Natural killer cell (primary cell): ENCODE measurements at regions of chr17 and their contacts with region 1.

Region 1: DNA sequence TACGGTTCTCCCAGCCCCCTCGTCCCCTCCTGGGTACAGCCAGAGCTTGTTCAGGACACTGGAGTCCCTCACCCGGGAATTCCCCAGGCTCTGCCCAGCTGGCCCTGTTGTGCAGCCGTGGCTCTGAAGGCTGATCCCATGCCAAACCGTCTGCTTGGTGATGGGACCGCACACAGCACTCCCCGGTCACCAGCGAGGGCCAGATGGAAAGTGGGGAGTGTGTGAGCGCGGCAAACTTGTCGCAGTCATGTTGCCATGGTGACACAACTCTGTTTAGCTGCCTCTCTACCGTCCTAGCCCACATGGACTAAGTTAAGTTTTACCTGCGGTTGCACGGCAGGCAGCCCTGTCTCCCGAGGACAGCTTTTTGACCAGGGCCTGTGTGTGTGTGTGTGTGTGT is 107.9 kb downstream of the RAP1GAP2 start:
- DNase-seq: no peak
- ATAC-seq: peak in 2 of 3 donors; percentile 12 to 16
- H3K4me3 ChIP-seq: no peak overlapping the region
- H3K4me3 Mint-ChIP-seq: no peak overlapping the region
- H3K27ac ChIP-seq: no peak overlapping the region
- H3K27ac Mint-ChIP-seq: peak overlapping the region; percentile 91 to 94
- H3K4me1 ChIP-seq: peaks cover 79% of the 10 kb centered on the region
- H3K4me1 Mint-ChIP-seq: peaks cover 58 to 81% of the 10 kb centered on the region in 2 donors
- H3K27me3 ChIP-seq: no peaks in the 10 kb centered on the region
- H3K27me3 Mint-ChIP-seq: no peaks in the 10 kb centered on the region
- CTCF ChIP-seq: no peak

Region 2: DNA sequence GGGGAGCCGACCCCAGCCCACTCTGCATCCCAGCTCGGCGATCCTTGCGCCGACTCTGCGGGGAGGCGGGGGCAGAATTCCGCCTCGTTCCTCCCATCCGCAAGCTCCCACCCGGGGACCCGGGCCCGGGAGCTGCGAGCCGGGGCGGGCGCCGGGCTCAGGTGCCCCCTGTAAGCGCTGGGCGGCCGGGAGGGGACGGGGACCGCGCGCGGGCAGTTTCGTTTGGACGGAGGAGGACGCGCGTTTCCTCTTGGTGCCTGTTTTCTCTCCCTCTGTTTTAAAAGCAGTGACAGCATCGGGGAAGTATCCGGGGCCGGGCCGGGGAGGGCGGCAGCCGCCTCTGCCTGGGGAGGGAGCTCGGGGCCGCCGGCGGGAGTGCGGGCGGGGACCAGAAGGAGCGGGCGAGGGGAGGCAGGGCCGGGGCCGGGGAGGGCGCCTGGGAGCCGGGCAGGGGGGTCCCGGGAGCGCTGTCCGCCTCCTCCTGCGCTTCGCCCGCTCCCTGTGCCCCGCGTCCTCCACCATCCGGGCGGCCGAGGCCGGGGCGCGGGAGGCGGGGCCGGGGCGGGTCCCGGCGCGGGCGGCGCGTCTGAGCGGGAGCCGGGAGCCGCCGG is 50.9 kb before region 1 on chr17:
- intact Hi-C with region 1: loop called (anchors 10 kb)
- DNase-seq: peak; percentile 47 to 52
- ATAC-seq: peak; percentile 48 to 56 (median 54)
- H3K4me3 ChIP-seq: no peak overlapping the region
- H3K4me3 Mint-ChIP-seq: peak overlapping the region; percentile 52
- H3K27ac ChIP-seq: no peak overlapping the region
- H3K27ac Mint-ChIP-seq: peak overlapping the region in 1 of 2 donors; percentile 24
- H3K4me1 ChIP-seq: peaks cover 70% of the 10 kb centered on the region
- H3K4me1 Mint-ChIP-seq: peaks cover 61 to 79% of the 10 kb centered on the region in 2 donors
- H3K27me3 ChIP-seq: no peaks in the 10 kb centered on the region
- H3K27me3 Mint-ChIP-seq: no peaks in the 10 kb centered on the region
- CTCF ChIP-seq: no peak

Region 3: DNA sequence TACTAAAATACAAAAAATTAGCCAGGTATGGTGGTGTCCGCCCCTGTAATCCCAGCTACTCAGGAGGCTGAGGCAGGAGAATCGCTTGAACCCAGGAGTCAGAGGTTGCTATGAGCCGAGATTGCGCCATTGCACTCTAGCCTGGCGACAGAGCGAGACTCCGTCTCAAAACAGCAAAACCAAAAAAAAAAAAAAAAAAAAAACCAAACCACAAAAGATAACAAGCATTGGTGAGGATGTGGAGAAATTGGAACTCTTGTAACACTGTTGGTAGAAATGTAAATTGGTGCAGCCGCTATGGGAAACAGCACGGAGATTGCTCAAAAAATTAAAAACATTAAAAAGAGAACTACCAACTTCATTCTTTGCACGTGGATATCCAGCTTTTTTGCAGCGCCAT is 39.8 kb after region 1 on chr17:
- intact Hi-C with region 1: no loop called
- DNase-seq: peak in 1 of 2 donors; percentile 41
- ATAC-seq: peak; percentile 49 to 66 (median 51)
- H3K4me3 ChIP-seq: no peak overlapping the region
- H3K4me3 Mint-ChIP-seq: peak overlapping the region; percentile 60
- H3K27ac ChIP-seq: no peak overlapping the region
- H3K27ac Mint-ChIP-seq: peak overlapping the region; percentile 32 to 81
- H3K4me1 ChIP-seq: peaks cover 45% of the 10 kb centered on the region
- H3K4me1 Mint-ChIP-seq: peaks cover 55 to 86% of the 10 kb centered on the region in 2 donors
- H3K27me3 ChIP-seq: no peaks in the 10 kb centered on the region
- H3K27me3 Mint-ChIP-seq: no peaks in the 10 kb centered on the region
- CTCF ChIP-seq: no peak

Region 4: GRCh38 chr17:2954898-2955445 is 50.8 kb after region 1 on chr17:
- intact Hi-C with region 1: loop called (anchors 10 kb)
- DNase-seq: peak; percentile 12 to 38
- ATAC-seq: peak; percentile 39 to 71 (median 66)
- H3K4me3 ChIP-seq: no peak overlapping the region
- H3K4me3 Mint-ChIP-seq: peak overlapping the region; percentile 80
- H3K27ac ChIP-seq: no peak overlapping the region
- H3K27ac Mint-ChIP-seq: peak overlapping the region; percentile 67 to 79
- H3K4me1 ChIP-seq: peaks cover 31% of the 10 kb centered on the region
- H3K4me1 Mint-ChIP-seq: peaks cover 63 to 77% of the 10 kb centered on the region in 2 donors
- H3K27me3 ChIP-seq: no peaks in the 10 kb centered on the region
- H3K27me3 Mint-ChIP-seq: no peaks in the 10 kb centered on the region
- CTCF ChIP-seq: no peak

Region 5: DNA sequence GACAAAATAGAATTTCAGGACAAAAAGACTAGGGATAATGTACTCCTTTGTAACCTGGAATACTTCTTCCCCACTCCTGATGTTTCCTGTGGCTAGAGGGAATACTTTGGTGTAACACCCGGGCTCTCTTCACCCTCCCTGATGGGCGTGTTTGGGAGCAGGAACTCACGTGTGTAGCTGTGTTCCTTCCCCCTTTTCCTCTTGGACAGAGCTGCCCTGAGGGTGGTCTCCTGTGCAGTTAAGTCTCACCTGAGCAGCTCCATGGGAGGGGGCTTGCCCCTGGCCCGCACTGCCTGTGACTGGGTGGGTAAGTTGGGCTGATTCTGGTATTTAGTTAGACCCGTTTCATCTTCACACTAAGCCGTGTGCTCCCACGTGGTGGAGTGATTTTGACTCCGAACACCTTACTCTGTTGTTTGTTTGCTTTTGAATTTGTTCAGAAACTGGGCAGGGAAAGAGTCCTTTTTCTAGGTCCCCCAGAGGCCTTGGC is 71.4 kb after region 1 on chr17:
- intact Hi-C with region 1: no loop called
- DNase-seq: no peak
- ATAC-seq: no peak
- H3K4me3 ChIP-seq: no peak overlapping the region
- H3K4me3 Mint-ChIP-seq: no peak overlapping the region
- H3K27ac ChIP-seq: no peak overlapping the region
- H3K27ac Mint-ChIP-seq: peak overlapping the region; percentile 28 to 68
- H3K4me1 ChIP-seq: no peaks in the 10 kb centered on the region
- H3K4me1 Mint-ChIP-seq: peaks cover 15 to 23% of the 10 kb centered on the region in 2 donors
- H3K27me3 ChIP-seq: no peaks in the 10 kb centered on the region
- H3K27me3 Mint-ChIP-seq: no peaks in the 10 kb centered on the region
- CTCF ChIP-seq: no peak